ENCODE measurements at regions of chr7 and their contacts with region 1.

Region 1: DNA sequence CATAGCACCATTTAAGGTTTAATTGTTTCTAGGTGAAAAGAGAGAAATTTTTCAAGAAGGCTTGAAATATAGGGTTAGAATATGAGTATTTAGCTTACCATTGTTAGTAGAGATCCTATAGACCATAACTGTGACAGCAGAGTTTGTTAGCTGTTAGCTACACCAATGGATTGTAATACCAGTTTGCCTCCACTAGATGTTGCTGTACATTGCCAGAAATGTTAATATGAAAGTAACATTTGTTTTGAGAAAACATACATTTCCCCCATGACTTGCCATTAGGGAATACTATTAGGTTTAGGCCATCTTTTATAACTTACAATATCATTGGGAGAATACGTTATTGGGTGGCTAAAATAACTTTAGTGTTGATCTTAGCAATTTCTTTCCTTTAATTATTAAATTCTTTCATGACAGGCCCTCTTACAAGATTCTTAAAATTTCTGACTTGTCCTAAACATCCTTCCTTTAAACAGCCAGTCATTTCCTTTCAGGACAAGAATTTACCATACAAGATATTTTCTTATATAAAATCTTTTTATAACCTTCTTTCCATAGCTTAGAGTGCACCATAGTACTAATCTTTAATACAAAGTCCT is 39.5 kb downstream of the ZNF117 start:
- DNase-seq: peak; percentile 66
- H3K4me3 ChIP-seq: no peak overlapping the region; a peak in 1 of 4 replicates
- H3K27ac ChIP-seq: no peak overlapping the region
- H3K4me1 ChIP-seq: peaks cover 0 to 18% of the 10 kb centered on the region in 2 experiments; a peak in 2 of 4 replicates
- H3K27me3 ChIP-seq: peaks cover 18% of the 10 kb centered on the region
- CTCF ChIP-seq: peak; percentile 96
- EP300 ChIP-seq: no peak
- RAD21 ChIP-seq: peak; percentile 95

Region 2: DNA sequence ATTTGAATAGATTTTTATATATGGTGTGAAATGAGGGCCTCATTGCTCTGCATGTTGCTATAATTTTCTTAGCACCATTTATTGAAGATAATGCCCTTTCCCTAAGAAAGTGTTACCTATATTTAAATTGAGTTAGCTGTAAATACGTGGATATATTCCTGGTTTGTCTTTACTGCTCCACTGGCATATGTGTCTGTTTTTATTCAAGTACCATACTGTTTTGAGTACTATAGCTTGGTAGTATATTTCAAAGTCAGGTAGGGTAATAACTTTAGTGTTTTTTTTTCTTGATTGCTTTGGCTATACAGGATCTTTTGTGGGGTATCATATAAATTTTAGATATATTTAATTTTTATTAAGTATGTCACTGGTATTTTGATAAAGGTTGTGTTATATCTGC is 16.9 kb before region 1 on chr7:
- CTCF ChIA-PET with region 1: interaction called, 29 read pairs
- POLR2A ChIA-PET with region 1: no interaction called
- DNase-seq: no peak
- H3K4me3 ChIP-seq: no peak overlapping the region
- H3K27ac ChIP-seq: no peak overlapping the region
- H3K4me1 ChIP-seq: no peaks in the 10 kb centered on the region
- H3K27me3 ChIP-seq: no peaks in the 10 kb centered on the region
- CTCF ChIP-seq: no peak
- EP300 ChIP-seq: no peak
- RAD21 ChIP-seq: no peak